ENCODE measurements at regions of chr4 and their contacts with region 1.

Region 1: DNA sequence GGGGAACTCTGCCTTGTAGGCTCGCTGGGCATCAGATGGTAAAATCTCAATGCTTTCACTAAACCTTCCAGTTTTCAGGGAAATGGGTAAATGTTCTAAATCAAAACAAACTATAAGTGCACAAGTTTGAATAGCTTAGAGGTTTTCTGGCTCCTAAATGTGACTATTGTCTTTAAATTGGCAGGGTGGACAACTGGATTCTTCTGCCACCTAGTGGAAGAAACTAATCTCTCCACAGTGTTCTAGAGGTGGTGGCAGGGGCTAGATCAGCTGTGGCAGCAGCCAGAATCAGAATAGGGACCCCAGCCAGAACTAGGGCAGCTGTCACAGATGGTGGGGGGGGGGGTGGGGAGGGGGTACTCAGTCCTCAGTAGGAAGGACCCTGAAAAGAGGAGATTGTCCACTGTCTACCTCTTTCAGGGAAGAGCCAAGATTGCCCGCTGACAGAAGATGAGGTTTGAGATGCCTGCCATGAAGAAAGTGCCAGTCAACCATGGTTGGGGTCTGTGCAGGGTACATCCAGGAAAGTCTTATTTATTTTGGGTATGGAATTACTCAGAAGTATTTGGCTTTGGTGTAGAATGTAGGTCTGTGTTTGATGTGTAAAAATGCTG is 201.4 kb downstream of the CCNG2 start:
- DNase-seq: peak in 4 of 5 donors; percentile 1 to 9 (median 6)
- H3K4me3 ChIP-seq: no peak overlapping the region
- H3K4me3 Mint-ChIP-seq: no peak overlapping the region
- H3K27ac ChIP-seq: no peak overlapping the region
- H3K27ac Mint-ChIP-seq: no peak overlapping the region
- H3K4me1 ChIP-seq: no peaks in the 10 kb centered on the region
- H3K4me1 Mint-ChIP-seq: no peaks in the 10 kb centered on the region
- H3K27me3 ChIP-seq: no peaks in the 10 kb centered on the region
- H3K27me3 Mint-ChIP-seq: peaks cover 4 to 7% of the 10 kb centered on the region in 2 donors

Region 2: DNA sequence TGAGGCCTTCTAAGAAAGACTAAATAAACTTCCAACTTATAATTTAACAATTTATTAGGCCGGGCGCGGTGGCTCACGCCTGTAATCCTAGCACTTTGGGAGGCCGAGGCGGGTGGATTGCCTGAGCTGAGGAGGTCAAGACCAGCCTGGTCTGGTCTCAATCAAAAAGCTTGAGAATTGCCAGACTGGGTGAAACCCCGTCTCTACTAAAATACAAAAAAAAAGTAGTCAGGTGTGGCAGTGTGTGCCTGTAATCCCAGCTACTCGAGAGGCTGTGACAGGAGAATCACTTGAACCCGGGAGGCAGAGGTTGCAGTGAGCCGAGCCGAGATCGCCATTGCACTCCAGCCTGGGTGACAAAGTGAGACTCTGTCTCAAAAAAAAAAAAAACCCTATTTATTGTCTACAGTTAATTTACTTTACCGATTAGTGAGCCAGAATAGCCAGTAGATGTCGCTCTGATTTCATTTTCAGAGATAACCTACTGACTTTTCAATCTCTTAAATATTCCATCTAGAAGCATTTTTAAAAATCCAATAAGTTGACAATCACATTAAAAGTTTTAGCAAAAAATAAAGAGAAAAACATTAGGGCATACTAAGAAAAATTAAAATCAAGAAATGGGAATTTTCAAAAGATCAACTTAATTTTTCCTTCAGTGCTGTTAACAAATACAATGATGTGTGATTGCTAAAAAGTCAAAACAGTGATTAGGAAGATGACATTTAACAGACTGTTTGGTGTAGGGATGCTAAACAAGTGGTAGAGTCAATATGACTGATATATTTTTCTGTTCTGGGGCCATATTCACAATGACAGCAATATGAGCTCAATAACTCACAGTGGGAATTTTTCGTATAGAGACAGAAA is 927.7 kb before region 1 on chr4:
- CTCF ChIA-PET with region 1: interaction called, 8 read pairs
- POLR2A ChIA-PET with region 1: no interaction called
- intact Hi-C with region 1: loop called (anchors 5 kb)
- DNase-seq: peak in 4 of 5 donors; percentile 15 to 28 (median 18)
- H3K4me3 ChIP-seq: no peak overlapping the region
- H3K4me3 Mint-ChIP-seq: no peak overlapping the region
- H3K27ac ChIP-seq: no peak overlapping the region
- H3K27ac Mint-ChIP-seq: no peak overlapping the region
- H3K4me1 ChIP-seq: no peaks in the 10 kb centered on the region
- H3K4me1 Mint-ChIP-seq: peaks cover 0 to 2% (median under 1%) of the 10 kb centered on the region in 4 donors
- H3K27me3 ChIP-seq: no peaks in the 10 kb centered on the region
- H3K27me3 Mint-ChIP-seq: peaks cover 7 to 8% of the 10 kb centered on the region in 2 donors